Colonic mucosa (tissue), 4 donors: ENCODE measurements at regions of chr16 and their contacts with region 1.

Region 1: GRCh38 chr16:69709456-69710084 is 16.8 kb downstream of the NQO1 start:
- DNase-seq: no peak
- H3K4me3 ChIP-seq: no peak overlapping the region
- H3K27ac ChIP-seq: no peak overlapping the region
- H3K4me1 ChIP-seq: no peaks in the 10 kb centered on the region
- H3K27me3 ChIP-seq: no peaks in the 10 kb centered on the region
- CTCF ChIP-seq: peak; percentile 56

Region 2: GRCh38 chr16:69754469-69755310 is 45.1 kb after region 1 on chr16 and contains the start of gene NOB1:
- intact Hi-C with region 1: loop called (anchors 2 kb)
- DNase-seq: peak; percentile 95
- H3K4me3 ChIP-seq: peak within 1 kb of the TSS; percentile 92
- H3K27ac ChIP-seq: peak within 1 kb of the TSS; percentile 51
- H3K4me1 ChIP-seq: no peaks in the 10 kb centered on the region
- H3K27me3 ChIP-seq: no peaks in the 10 kb centered on the region
- CTCF ChIP-seq: peak; percentile 97
- total RNA-seq, gene NOB1: 36.3 to 45.8 TPM